ENCODE measurements at regions of chr11 and their contacts with region 1.

Region 1: GRCh38 chr11:31340903-31341572 is 28.5 kb downstream of the DCDC1 start:
- DNase-seq: peak; percentile 25 to 37 (median 29)
- H3K4me3 ChIP-seq: no peak overlapping the region
- H3K4me3 Mint-ChIP-seq: no peak overlapping the region
- H3K27ac ChIP-seq: no peak overlapping the region
- H3K27ac Mint-ChIP-seq: no peak overlapping the region
- H3K4me1 ChIP-seq: no peaks in the 10 kb centered on the region
- H3K4me1 Mint-ChIP-seq: peaks cover 0 to 7% (median 0%) of the 10 kb centered on the region in 4 donors
- H3K27me3 ChIP-seq: no peaks in the 10 kb centered on the region
- H3K27me3 Mint-ChIP-seq: peaks cover 9 to 10% of the 10 kb centered on the region in 2 donors

Region 2: DNA sequence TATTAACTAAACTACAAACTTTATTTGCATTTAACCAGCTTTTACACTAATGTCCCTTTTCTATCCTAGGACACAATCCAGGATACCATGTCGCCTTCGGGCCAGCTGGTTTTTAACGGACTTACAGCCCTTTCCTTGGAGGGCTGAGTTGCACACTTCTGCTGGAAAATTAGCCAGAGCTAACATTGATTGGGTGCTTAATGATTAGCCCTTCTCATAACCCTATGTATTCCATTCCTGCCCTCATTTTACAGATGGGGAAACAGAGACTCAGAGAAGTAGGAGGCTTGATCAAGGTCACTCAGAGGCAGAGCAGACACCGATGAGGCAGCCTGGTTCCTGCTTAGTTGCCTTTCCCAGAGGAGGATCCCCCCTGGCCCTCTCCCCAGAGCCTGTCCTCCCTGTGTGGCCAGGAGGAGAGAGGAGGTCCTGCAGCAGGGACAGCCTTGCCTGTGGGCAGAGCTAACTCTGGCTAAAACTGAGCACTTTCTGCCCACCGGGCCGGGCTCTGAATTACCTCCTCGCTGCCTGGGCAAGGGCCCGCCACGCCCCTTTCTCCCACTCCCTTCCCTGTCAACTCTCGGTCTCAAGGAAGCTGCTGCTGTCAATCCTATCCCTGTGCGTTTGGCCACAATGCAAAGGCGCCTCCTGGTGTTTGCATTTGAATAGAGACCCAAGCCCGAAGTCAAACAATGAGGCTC is 529.7 kb after region 1 on chr11:
- CTCF ChIA-PET with region 1: interaction called, 3 read pairs
- POLR2A ChIA-PET with region 1: no interaction called
- intact Hi-C with region 1: loop called (anchors 5 kb)
- DNase-seq: peak in 4 of 5 donors; percentile 0 to 11 (median 2)
- H3K4me3 ChIP-seq: no peak overlapping the region
- H3K4me3 Mint-ChIP-seq: no peak overlapping the region
- H3K27ac ChIP-seq: no peak overlapping the region
- H3K27ac Mint-ChIP-seq: no peak overlapping the region
- H3K4me1 ChIP-seq: no peaks in the 10 kb centered on the region
- H3K4me1 Mint-ChIP-seq: no peaks in the 10 kb centered on the region
- H3K27me3 ChIP-seq: no peaks in the 10 kb centered on the region
- H3K27me3 Mint-ChIP-seq: peaks cover 16 to 37% of the 10 kb centered on the region in 2 donors

Region 3: DNA sequence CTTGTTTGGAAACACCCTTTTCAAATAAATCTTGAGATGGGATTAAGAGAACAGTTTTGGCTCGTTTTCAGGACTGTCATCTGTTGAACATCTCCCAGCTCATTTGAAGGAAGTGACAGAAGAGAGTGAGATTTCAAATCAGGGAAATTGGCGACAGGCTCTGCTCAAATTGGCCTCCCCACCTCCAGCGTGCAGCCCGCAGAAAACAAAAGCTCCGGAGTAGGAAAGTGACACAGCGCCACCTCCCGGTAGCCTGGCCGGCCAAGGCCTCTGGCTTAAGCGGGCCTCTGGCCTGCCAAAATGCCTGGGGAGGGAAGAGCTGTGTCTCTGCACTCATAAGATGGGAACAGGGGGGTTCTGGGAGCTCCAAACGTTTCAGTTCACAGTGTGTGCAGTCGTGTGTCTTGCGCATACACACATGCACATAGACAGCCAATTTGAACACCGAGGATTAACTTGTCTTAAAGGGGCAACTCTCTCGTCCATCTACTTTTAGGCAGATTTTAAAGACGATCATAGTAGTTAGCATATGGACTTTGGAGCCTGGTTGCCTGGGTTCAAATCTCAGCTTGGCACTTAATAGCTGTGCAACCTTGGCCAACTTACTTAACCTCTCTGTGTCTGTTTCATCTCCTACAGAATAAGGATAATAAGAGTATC is 617.2 kb after region 1 on chr11:
- CTCF ChIA-PET with region 1: no interaction called
- POLR2A ChIA-PET with region 1: no interaction called
- intact Hi-C with region 1: loop called (anchors 5 kb)
- DNase-seq: peak in 4 of 5 donors; percentile 33 to 40 (median 37)
- H3K4me3 ChIP-seq: no peak overlapping the region
- H3K4me3 Mint-ChIP-seq: peak overlapping the region in 1 of 8 donors; percentile 37
- H3K27ac ChIP-seq: no peak overlapping the region
- H3K27ac Mint-ChIP-seq: no peak overlapping the region
- H3K4me1 ChIP-seq: no peaks in the 10 kb centered on the region
- H3K4me1 Mint-ChIP-seq: peaks cover 0 to 4% (median 0%) of the 10 kb centered on the region in 4 donors
- H3K27me3 ChIP-seq: no peaks in the 10 kb centered on the region
- H3K27me3 Mint-ChIP-seq: peaks cover 0 to 4% of the 10 kb centered on the region in 2 donors

Measured in CD4-positive, alpha-beta memory T cell (primary cell).